BJ (cell line): ENCODE measurements at regions of chr14 and their contacts with region 1.

Region 1: DNA sequence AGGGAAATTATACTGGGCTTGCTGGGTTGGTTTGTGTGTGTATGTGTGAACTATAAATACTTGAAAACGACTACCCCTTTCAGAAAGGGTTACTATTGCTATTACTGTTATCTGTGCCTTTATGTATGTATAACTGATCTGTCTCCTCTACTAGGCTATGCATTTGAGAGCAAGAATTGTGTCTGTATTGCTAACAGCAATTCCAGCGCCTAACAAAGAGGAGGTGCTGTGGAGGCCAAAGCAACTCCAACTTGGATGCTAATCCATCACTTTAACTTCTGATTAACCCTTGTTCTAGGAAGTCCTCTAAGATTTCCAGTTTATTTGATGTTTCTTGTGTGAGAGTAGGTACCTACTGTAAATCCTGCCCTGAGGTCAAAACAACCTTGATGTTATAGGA is 313.9 kb downstream of the PCNX1 start:
- DNase-seq: no peak
- H3K4me3 ChIP-seq: no peak overlapping the region
- H3K27me3 ChIP-seq: no peaks in the 10 kb centered on the region
- CTCF ChIP-seq: no peak

Region 2: DNA sequence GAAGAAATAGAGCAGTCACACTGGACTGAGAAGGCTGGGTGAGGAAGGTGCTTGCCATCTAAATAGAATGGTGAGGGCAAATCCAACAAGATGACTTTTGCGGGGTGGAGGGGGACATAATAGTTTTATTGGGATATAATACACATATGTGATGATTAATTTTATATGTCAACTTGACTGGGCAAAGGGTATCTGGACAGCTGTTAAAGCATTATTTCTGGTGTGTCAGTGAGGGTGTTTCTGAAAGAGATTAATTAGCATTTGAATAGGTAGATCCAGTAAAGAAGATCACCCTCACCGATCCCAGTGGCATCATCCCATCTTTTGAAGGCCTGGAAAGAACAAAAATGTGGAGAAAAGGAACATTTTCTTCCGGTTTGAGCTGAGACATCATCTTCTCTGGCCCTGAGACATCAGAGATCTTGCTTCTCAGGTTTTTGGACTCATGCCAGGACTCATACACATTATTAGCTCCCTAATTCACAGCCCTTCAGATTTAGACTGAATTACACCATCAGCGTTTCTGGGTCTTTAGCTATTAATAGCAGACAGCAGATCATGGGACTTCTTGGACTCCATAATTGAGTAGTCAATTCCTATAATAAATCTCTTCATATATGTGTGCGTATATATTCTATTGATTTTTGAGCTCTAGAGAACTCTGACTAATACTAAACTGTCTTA is 30.3 kb before region 1 on chr14:
- CTCF ChIA-PET with region 1: no interaction called
- POLR2A ChIA-PET with region 1: no interaction called
- DNase-seq: no peak
- H3K4me3 ChIP-seq: no peak overlapping the region
- H3K27me3 ChIP-seq: no peaks in the 10 kb centered on the region
- CTCF ChIP-seq: no peak

Region 3: DNA sequence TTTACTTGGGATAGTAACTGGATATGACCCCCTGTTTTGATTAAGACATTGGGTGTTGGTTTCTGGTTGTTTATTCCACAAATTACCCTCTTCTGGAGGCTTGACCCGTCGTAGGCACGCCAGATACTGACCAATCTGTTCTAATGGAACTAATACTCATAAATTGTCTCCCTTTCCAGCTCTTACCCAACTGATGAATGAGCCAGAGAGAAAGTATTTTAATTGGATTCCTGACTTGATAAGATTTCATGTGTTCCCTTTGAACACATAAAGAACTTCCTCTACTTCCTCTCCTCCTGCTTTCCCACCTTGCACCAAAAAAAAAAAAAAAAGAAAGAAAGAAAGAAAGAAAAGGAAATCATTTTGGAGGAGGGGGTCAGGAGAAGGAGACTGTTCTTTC is 27.1 kb after region 1 on chr14:
- CTCF ChIA-PET with region 1: no interaction called
- POLR2A ChIA-PET with region 1: interaction called, 12 read pairs
- DNase-seq: peak; percentile 79
- H3K4me3 ChIP-seq: no peak overlapping the region
- H3K27me3 ChIP-seq: no peaks in the 10 kb centered on the region
- CTCF ChIP-seq: no peak